Activated naive CD4-positive, alpha-beta T cell treated with anti-CD3 and anti-CD28 coated beads for 36 hours (primary cell): ENCODE measurements at regions of chr19 and their contacts with region 1.

Region 1: GRCh38 chr19:39970675-39971379 is at the start of gene PSMC4:
- DNase-seq: peak; percentile 99
- H3K4me3 Mint-ChIP-seq: peak within 1 kb of the TSS; percentile 95
- H3K27ac Mint-ChIP-seq: peak within 1 kb of the TSS; percentile 97
- H3K4me1 Mint-ChIP-seq: peaks cover 48% of the 10 kb centered on the region
- H3K27me3 Mint-ChIP-seq: no peaks in the 10 kb centered on the region
- total RNA-seq, gene PSMC4: 79.7 to 82.1 TPM

Region 2: GRCh38 chr19:39679056-39679790 is 291.6 kb before region 1 on chr19:
- CTCF ChIA-PET with region 1: no interaction called
- intact Hi-C with region 1: no loop called
- DNase-seq: peak; percentile 71
- H3K4me3 Mint-ChIP-seq: peak overlapping the region; percentile 69
- H3K27ac Mint-ChIP-seq: peak overlapping the region; percentile 84
- H3K4me1 Mint-ChIP-seq: peaks cover 50% of the 10 kb centered on the region
- H3K27me3 Mint-ChIP-seq: no peaks in the 10 kb centered on the region

Region 3: DNA sequence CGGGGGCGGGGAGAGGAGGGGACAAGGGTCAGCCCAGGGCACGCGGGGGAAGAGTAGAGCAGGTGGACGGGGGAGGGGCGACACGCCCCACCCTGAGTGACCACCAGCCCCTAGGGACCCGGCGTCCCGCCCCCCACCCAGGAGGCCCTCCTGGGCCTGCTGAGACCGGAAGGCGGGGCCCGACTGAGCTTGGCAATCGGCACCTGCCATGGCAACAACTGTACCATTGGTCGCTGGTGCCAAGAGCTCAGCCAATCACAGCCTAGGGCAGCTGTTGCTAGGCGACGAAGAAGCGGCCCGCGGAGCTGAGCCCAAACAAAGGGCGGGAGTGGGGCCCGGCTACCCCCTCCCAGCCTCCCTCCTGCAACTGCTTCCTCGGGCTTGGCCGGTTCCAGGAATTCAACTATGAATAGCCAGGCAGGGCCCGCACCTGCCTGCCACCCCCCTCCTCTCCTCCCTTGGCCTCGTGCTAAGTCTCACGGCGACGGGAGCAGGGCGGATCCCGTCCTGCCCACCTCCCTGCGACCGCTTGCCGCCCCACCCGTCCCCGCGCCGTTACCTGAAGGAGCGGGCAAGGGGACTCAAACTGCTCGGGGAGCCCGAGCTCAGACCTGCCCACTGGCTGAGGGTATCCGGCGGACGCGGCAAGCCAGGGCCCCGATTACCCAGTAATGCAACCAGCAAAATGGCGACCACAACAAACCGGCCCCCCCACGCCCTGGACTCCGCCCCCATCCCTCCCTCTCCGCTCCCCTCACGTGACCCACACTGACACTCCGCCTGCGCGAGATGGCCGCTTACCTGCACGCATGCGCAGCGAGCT is 137.2 kb before region 1 on chr19 and contains the start of gene DYRK1B:
- CTCF ChIA-PET with region 1: no interaction called
- intact Hi-C with region 1: loop called (anchors 5 kb)
- DNase-seq: peak; percentile 98
- H3K4me3 Mint-ChIP-seq: peak within 1 kb of the TSS; percentile 63
- H3K27ac Mint-ChIP-seq: peak within 1 kb of the TSS; percentile 83
- H3K4me1 Mint-ChIP-seq: peaks cover 27% of the 10 kb centered on the region
- H3K27me3 Mint-ChIP-seq: no peaks in the 10 kb centered on the region
- total RNA-seq, gene DYRK1B: 6.1 to 6.6 TPM

Region 4: GRCh38 chr19:39870171-39870590 is 100.6 kb before region 1 on chr19:
- CTCF ChIA-PET with region 1: no interaction called
- intact Hi-C with region 1: no loop called
- DNase-seq: no peak
- H3K4me3 Mint-ChIP-seq: no peak overlapping the region
- H3K27ac Mint-ChIP-seq: no peak overlapping the region
- H3K4me1 Mint-ChIP-seq: no peaks in the 10 kb centered on the region
- H3K27me3 Mint-ChIP-seq: no peaks in the 10 kb centered on the region

Region 5: GRCh38 chr19:39889872-39890545 is 80.8 kb before region 1 on chr19:
- CTCF ChIA-PET with region 1: interaction called, 7 read pairs
- intact Hi-C with region 1: loop called (anchors 5 kb)
- DNase-seq: no peak
- H3K4me3 Mint-ChIP-seq: no peak overlapping the region
- H3K27ac Mint-ChIP-seq: no peak overlapping the region
- H3K4me1 Mint-ChIP-seq: peaks cover 2% of the 10 kb centered on the region
- H3K27me3 Mint-ChIP-seq: no peaks in the 10 kb centered on the region

Region 6: DNA sequence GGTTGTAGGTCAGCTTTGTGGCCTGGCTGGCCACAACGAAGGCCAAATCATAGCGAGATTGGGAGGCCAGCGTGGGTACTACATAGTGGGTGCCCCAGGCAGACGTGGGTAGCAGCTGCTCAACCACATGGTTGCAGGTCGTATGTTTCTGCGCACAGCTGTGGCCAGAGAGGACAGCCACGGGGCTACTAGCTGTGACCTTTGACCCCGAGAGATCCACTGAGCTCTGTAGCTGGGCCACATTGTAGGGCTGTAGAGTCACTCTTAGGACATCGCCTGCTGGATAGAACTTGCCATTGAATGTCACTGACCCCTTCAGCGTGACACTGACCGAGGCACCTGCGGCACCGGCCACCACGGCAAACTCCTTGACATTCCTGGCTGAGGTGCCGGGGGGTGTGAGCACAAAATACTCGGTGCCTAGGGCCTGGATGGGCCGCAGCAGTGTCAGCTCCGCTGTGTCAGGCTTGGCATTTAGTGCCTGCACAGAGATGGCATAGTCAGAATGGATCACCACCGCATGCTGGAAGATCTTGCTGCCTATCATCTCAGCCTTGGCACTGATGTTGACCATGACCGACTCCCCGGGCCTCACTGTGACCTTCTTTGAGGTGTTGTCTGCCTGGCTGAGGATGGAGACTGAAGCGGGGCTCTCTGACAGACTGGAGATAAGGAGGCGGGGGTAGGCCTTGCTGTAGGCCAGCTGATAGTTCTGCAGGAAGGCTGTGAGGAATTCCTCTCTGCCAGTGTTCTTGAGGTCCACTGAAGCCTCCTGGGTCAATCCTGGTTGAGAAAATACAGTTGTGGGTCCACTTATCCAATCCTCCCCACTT is 43.1 kb before region 1 on chr19:
- CTCF ChIA-PET with region 1: interaction called, 13 read pairs
- intact Hi-C with region 1: no loop called
- DNase-seq: no peak
- H3K4me3 Mint-ChIP-seq: no peak overlapping the region
- H3K27ac Mint-ChIP-seq: peak overlapping the region; percentile 78
- H3K4me1 Mint-ChIP-seq: peaks cover 27% of the 10 kb centered on the region
- H3K27me3 Mint-ChIP-seq: no peaks in the 10 kb centered on the region

Region 7: DNA sequence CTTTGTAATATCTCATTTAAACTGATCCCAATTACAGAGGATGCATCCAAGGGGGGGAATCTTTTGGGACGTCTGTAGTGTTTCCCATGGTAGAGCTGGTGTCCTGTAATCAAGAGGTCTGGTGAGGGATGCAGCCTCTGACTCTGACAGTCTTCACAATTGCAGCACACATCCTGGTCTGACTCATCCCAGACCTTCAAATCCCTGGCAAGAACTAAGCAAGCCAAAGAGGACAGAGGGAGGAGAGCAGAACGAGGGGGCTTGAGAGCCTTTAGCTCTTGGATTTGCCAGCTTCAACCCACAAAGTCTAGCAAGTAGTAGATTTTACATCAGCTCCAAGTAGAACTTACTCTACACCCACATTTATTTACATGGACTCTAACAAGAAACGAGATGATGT is 19.1 kb before region 1 on chr19:
- CTCF ChIA-PET with region 1: interaction called, 20 read pairs
- intact Hi-C with region 1: loop called (anchors 2 kb)
- DNase-seq: peak; percentile 42
- H3K4me3 Mint-ChIP-seq: peak overlapping the region; percentile 1
- H3K27ac Mint-ChIP-seq: peak overlapping the region; percentile 93
- H3K4me1 Mint-ChIP-seq: peaks cover 84% of the 10 kb centered on the region
- H3K27me3 Mint-ChIP-seq: no peaks in the 10 kb centered on the region

Region 8: GRCh38 chr19:40006273-40006691 is 35.5 kb after region 1 on chr19:
- CTCF ChIA-PET with region 1: no interaction called
- intact Hi-C with region 1: no loop called
- DNase-seq: no peak
- H3K4me3 Mint-ChIP-seq: no peak overlapping the region
- H3K27ac Mint-ChIP-seq: no peak overlapping the region
- H3K4me1 Mint-ChIP-seq: peaks cover 6% of the 10 kb centered on the region
- H3K27me3 Mint-ChIP-seq: no peaks in the 10 kb centered on the region

Region 9: GRCh38 chr19:40025938-40026596 is 55.2 kb after region 1 on chr19:
- CTCF ChIA-PET with region 1: no interaction called
- intact Hi-C with region 1: no loop called
- DNase-seq: no peak
- H3K4me3 Mint-ChIP-seq: no peak overlapping the region
- H3K27ac Mint-ChIP-seq: no peak overlapping the region
- H3K4me1 Mint-ChIP-seq: no peaks in the 10 kb centered on the region
- H3K27me3 Mint-ChIP-seq: no peaks in the 10 kb centered on the region